Activated CD4-positive, alpha-beta memory T cell treated with anti-CD3 and anti-CD28 coated beads, Interleukin-2, amount 10 ng/mL, durations not matched to agents 7 days and 5 days (primary cell): ENCODE measurements at regions of chr22 and their contacts with region 1.

Region 1: DNA sequence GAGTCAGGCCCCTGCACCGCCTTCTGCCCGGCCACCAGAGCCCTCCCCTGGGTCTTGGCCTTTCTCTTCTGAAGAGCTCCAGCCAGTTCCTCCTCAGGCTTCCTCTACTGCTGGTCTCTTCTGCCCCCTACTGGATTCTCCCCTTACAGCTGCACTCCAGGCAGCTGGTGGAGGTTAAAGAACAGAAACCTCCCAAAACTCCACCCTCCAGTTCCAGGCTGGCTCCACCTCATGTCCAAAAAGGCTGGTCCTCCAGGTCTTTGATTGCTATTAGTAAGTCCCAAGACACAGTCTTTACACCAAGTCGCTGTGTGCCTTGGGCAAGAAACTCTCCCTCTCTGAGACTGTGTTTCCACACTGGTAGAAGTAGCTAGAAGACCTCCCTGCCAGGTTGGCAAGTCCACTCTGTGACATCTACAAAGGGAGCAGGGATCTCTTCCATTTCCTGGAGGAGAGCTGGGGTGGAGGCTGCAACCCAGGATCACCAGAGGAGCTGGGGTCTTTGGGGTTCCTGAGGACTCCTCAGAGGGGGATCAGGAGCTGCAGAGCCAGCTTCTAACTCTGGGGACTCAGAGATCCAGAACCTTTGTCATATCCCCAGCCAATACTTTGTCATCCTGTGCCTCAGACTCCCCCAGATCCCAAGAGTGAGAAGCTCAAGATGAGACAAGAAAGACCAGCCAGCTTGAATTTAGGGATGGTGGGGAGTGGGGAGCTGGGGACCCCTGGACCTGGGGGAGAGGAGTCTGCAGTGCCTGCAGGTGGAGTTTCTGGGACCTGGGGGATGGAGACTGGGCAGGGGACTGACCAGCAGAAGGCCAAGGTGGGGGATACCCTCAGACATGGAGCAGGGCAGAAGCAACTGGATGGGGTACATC is 3.4 kb upstream of the IGLL5 start:
- DNase-seq: peak; percentile 78
- H3K4me3 Mint-ChIP-seq: no peak overlapping the region
- H3K27ac Mint-ChIP-seq: no peak overlapping the region
- H3K4me1 Mint-ChIP-seq: peaks cover 22% of the 10 kb centered on the region
- H3K27me3 Mint-ChIP-seq: peaks cover 38% of the 10 kb centered on the region

Region 2: GRCh38 chr22:22745225-22746060 is 138.8 kb before region 1 on chr22:
- CTCF ChIA-PET with region 1: interaction called, 22 read pairs
- POLR2A ChIA-PET with region 1: no interaction called
- DNase-seq: peak; percentile 51
- H3K4me3 Mint-ChIP-seq: no peak overlapping the region
- H3K27ac Mint-ChIP-seq: no peak overlapping the region
- H3K4me1 Mint-ChIP-seq: peaks cover 2% of the 10 kb centered on the region
- H3K27me3 Mint-ChIP-seq: peaks cover 29% of the 10 kb centered on the region

Region 3: GRCh38 chr22:22779213-22779612 is 105.0 kb before region 1 on chr22:
- CTCF ChIA-PET with region 1: interaction called, 10 read pairs
- POLR2A ChIA-PET with region 1: no interaction called
- DNase-seq: no peak
- H3K4me3 Mint-ChIP-seq: no peak overlapping the region
- H3K27ac Mint-ChIP-seq: no peak overlapping the region
- H3K4me1 Mint-ChIP-seq: no peaks in the 10 kb centered on the region
- H3K27me3 Mint-ChIP-seq: peaks cover 16% of the 10 kb centered on the region

Region 4: GRCh38 chr22:22810018-22810427 is 74.2 kb before region 1 on chr22:
- CTCF ChIA-PET with region 1: interaction called, 235 read pairs
- POLR2A ChIA-PET with region 1: interaction called, 9 read pairs
- DNase-seq: peak; percentile 82
- H3K4me3 Mint-ChIP-seq: no peak overlapping the region
- H3K27ac Mint-ChIP-seq: no peak overlapping the region
- H3K4me1 Mint-ChIP-seq: peaks cover 8% of the 10 kb centered on the region
- H3K27me3 Mint-ChIP-seq: peaks cover 29% of the 10 kb centered on the region

Region 5: DNA sequence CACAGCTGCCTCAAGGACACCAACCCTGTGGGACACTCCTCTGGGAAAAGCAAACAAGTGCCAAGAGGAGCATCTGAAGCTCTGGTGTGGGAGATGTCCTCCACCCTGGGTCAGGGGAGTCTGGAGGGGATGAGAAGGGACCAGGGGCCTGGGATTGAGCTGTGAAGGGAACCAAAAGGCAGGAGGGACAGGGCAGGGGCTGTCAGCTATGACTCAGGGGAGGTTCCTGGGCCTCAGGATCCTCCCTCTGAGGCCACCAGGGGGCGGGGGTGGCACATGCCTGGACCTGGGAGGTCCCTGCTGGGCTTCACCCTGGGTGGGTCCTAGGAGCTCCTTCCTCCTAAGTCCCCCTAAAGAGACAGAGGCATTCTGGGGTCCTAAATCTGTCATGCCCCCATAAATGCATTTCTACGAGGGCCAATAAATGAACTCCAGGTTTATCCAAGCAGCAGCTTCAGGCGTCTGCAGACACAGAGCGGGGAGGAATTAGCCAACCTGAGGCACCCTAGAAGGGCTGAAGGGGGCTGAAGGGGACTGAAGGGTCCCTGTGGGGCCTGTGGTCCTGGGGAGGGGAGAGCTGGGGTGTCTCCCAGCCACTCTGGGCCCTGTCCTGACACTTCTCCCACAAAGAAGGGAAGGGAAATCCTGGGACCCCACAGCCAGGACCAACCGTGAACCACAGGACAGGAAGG is 28.5 kb before region 1 on chr22:
- CTCF ChIA-PET with region 1: interaction called, 45 read pairs
- POLR2A ChIA-PET with region 1: interaction called, 3 read pairs
- DNase-seq: peak; percentile 51
- H3K4me3 Mint-ChIP-seq: no peak overlapping the region
- H3K27ac Mint-ChIP-seq: no peak overlapping the region
- H3K4me1 Mint-ChIP-seq: no peaks in the 10 kb centered on the region
- H3K27me3 Mint-ChIP-seq: peaks cover 31% of the 10 kb centered on the region

Region 6: DNA sequence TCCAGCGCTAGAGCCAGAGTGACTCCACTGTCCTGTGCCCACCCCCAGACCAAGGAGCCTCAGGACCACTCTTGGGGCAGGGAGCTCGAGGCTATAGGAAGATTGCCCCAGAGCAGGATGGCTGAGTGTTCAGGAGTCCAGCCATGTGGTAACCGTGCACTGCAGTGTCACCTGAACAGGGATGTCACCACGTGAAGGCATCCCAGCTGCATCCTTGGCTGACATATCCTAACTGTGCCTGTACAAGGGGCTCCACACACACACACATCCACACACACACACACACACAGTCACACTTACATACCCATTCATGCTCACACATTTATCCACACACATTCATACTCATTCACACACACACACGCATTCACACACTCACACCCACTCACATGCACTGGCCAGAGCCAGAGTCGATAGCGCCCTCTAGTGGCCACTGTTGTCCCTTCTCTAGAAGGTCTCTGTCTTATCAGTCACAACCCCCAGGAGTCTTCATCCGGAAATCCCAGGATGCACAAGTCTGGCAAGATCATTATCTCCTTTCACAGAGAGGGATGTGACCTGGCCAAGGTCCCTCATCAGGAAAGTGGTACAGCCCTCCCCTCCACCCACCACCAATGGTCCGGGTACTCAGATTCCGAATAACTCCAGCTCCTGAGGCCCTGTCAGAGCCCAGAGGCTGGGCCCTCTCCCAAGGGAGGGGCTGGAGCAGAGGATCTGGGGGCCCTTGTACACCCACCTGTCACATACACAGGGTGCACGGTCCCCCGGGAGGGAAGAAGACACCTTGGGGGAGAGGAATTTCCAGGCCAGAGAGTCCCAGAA is 58.5 kb after region 1 on chr22:
- CTCF ChIA-PET with region 1: interaction called, 43 read pairs
- POLR2A ChIA-PET with region 1: interaction called, 13 read pairs
- DNase-seq: peak; percentile 84
- H3K4me3 Mint-ChIP-seq: no peak overlapping the region
- H3K27ac Mint-ChIP-seq: no peak overlapping the region
- H3K4me1 Mint-ChIP-seq: peaks cover 19% of the 10 kb centered on the region
- H3K27me3 Mint-ChIP-seq: peaks cover 15% of the 10 kb centered on the region